ENCODE measurements at regions of chr17 and their contacts with region 1.

Region 1: DNA sequence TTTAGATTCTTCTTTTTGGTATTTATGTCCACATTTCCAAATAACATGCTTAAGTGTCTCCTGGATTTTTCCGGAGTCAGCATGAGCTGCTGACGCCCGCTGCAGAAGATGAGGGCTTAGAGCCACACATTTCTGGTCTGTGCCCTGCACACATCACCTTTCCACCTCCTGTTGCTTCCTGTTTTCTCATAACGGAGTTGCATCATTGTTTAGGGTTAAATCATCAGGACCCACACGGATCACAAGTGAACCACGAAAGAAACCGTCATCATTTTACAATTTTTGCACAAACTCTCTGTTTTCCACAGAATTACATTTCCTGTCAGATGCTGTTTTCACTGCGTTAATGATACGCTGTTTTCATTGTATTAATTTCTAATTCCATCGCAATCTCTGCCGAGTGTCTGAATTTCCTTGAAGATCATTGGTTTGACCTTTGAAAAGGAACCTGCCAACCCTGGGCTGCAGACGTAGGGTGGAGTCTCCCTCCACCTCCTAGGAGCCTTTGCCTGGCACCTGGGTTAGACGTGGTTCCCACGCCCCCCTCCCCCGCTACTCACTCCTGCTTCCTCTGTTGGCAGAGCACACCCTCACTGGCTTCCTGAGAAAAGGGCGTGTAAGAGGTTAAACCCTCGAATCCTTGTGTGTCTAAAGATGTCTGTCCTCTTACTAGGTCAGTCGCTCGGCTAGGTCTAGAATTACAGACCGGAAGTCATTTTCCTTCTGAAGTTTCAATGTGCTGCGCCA is 68.2 kb downstream of the RNF213 start:
- DNase-seq: no peak
- ATAC-seq: no peak
- H3K4me3 ChIP-seq: no peak overlapping the region
- H3K27ac ChIP-seq: no peak overlapping the region
- H3K4me1 ChIP-seq: no peaks in the 10 kb centered on the region
- H3K27me3 ChIP-seq: no peaks in the 10 kb centered on the region
- CTCF ChIP-seq: no peak
- POLR2A ChIP-seq: no peak
- RAD21 ChIP-seq: no peak

Region 2: DNA sequence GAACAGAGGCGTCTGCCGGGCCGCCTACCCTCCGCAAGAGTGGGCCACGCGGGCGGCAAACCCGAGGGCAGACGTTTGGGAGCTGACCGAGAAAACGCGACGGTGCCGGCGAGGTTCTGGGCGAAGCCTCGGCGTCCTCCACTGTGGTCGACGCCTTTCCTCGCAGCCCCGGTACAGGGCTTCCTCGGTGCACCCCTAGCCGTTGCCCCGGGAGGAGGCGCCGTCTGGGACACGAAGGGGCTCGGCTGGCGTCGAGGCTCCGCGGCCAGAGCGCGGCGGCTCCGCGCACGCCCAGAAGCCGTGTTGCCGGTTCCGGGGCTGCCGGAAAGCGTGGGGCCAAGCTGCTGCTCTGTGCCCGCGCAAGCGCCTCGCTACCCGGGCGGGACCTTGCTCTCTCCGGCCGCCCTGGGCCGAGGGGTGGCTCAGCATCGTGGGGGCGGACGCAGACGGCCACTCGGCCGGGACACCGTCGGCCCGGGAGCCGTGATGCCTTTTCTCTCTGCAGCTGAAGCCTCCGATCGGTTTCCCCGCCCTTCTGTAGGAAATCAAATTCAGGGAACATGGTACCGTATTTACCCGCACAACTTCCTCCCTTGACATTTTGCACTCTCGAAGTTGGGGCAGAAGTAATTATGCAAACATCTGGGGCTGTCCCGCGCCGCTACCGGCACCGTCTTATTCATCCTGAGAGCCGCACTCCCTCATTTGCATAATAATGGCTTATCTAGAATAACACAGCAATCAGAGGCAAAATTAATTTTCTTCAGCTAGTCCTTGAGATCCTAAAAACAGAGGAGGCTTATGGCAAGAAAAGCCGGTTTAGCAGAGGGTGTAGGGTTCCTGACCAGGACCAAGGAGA is 524.6 kb before region 1 on chr17:
- CTCF ChIA-PET with region 1: no interaction called
- POLR2A ChIA-PET with region 1: no interaction called
- RAD21 ChIA-PET with region 1: no interaction called
- intact Hi-C with region 1: no loop called
- DNase-seq: no peak
- ATAC-seq: no peak
- H3K4me3 ChIP-seq: no peak overlapping the region
- H3K27ac ChIP-seq: no peak overlapping the region
- H3K4me1 ChIP-seq: peaks cover 24 to 50% of the 10 kb centered on the region in 2 experiments
- H3K27me3 ChIP-seq: no peaks in the 10 kb centered on the region
- CTCF ChIP-seq: no peak
- POLR2A ChIP-seq: no peak
- RAD21 ChIP-seq: no peak

Region 3: DNA sequence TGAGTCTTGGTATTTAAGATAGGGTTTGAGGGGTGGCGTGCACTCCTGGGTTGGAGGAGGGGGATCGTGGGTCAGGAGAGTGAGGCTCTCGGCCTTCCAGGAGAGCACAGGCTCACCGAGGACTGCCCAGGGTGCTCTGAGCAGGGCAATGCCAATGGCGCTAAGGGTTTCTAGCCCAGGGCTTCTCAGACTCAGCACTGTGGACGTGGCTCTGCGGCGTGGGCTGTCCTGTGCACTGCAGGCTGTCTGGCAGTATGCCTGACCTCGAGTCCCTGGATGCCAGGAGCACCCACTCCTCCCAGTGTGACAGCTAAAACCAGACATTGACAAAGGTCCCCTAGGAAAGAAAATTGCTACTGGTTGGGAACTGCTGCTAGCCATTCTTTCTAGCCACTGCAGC is 49.0 kb after region 1 on chr17:
- CTCF ChIA-PET with region 1: no interaction called
- POLR2A ChIA-PET with region 1: no interaction called
- RAD21 ChIA-PET with region 1: no interaction called
- intact Hi-C with region 1: loop called (anchors 1 kb)
- DNase-seq: no peak
- ATAC-seq: no peak
- H3K4me3 ChIP-seq: no peak overlapping the region
- H3K27ac ChIP-seq: no peak overlapping the region
- H3K4me1 ChIP-seq: no peaks in the 10 kb centered on the region
- H3K27me3 ChIP-seq: no peaks in the 10 kb centered on the region
- CTCF ChIP-seq: no peak
- POLR2A ChIP-seq: no peak
- RAD21 ChIP-seq: no peak

Region 4: DNA sequence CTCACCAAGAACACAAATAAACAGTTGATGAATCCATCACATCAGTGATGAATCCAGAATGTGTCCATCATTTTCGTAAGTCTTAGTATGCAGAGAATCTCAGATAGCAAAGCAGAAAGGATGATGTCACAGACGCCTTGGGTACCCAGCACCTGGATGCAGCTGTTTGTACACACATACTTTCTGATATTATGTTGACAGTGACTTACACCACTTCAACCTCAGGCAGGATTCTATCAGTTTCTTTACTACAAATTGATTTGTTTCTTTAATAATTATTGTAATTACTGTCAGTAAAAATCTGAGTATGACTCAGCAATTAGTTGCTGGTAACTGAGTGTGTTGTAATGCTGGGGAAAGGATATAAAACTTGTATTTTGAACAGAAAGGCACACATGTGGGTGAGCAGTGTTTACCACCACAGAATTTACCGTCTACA is 375.6 kb after region 1 on chr17:
- CTCF ChIA-PET with region 1: no interaction called
- POLR2A ChIA-PET with region 1: no interaction called
- RAD21 ChIA-PET with region 1: no interaction called
- intact Hi-C with region 1: no loop called
- DNase-seq: no peak
- ATAC-seq: no peak
- H3K4me3 ChIP-seq: no peak overlapping the region
- H3K27ac ChIP-seq: no peak overlapping the region
- H3K4me1 ChIP-seq: no peaks in the 10 kb centered on the region
- H3K27me3 ChIP-seq: no peaks in the 10 kb centered on the region
- CTCF ChIP-seq: no peak
- POLR2A ChIP-seq: no peak
- RAD21 ChIP-seq: no peak